B cell (primary cell): ENCODE measurements at regions of chr11 and their contacts with region 1.

Region 1: GRCh38 chr11:64742889-64743590 is 902 bp downstream of the RASGRP2 start:
- DNase-seq: peak; percentile 88
- ATAC-seq: peak; percentile 11
- H3K4me3 ChIP-seq: peak overlapping the region; percentile 48 to 99 (median 86)
- H3K4me3 Mint-ChIP-seq: peak overlapping the region; percentile 97
- H3K27ac ChIP-seq: peak overlapping the region; percentile 84 to 91
- H3K27ac Mint-ChIP-seq: peak overlapping the region; percentile 86
- H3K4me1 ChIP-seq: peaks cover 22 to 33% of the 10 kb centered on the region in 2 donors
- H3K4me1 Mint-ChIP-seq: peaks cover 49% of the 10 kb centered on the region
- H3K27me3 ChIP-seq: no peaks in the 10 kb centered on the region
- H3K27me3 Mint-ChIP-seq: no peaks in the 10 kb centered on the region
- CTCF ChIP-seq: peak; percentile 86

Region 2: GRCh38 chr11:64500176-64501013 is 242.6 kb before region 1 on chr11:
- CTCF ChIA-PET with region 1: no interaction called
- POLR2A ChIA-PET with region 1: no interaction called
- intact Hi-C with region 1: no loop called
- DNase-seq: no peak
- ATAC-seq: no peak
- H3K4me3 ChIP-seq: no peak overlapping the region
- H3K4me3 Mint-ChIP-seq: no peak overlapping the region
- H3K27ac ChIP-seq: no peak overlapping the region
- H3K27ac Mint-ChIP-seq: no peak overlapping the region
- H3K4me1 ChIP-seq: no peaks in the 10 kb centered on the region
- H3K4me1 Mint-ChIP-seq: no peaks in the 10 kb centered on the region
- H3K27me3 ChIP-seq: peaks cover 0 to 6% (median 2%) of the 10 kb centered on the region in 4 experiments
- H3K27me3 Mint-ChIP-seq: peaks cover 18% of the 10 kb centered on the region
- CTCF ChIP-seq: no peak

Region 3: DNA sequence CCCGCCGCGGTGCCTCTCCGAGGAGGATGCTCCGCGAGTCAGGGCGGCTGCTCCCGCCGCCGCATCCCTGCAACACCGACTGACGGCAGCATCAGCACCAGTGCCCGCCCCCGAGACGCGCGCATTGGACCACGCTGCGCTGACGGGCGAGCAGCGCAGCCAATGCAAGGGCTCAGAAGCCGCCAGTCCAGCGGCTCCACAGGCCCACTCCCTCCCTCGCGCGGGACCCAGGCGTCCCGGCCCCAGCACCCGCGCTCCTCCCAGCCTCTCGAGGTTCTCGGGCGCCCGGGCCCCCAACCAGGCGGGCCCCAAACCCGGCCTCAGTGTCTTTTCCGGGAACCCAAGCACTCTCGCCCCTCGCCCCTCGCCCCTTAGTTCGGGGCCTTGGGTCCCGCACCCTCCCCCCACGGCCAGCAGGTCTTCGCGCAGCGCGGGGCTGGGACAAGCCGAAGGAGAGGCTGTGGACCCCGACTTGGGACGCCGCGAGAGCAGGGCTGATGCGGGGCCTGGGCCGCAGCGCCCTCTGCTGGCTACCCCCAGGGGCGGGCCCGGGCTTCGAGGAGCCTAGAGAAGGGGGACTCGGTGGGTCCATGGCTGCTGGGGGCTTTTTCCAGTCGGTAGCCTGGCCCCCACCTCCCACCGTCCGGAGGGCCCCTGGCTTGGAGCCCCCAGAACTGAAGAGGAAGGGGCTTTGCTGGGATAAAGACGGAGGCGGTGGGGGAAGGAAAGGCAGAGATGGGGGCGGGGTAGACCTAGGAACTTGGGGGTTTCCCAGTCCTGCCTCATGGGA is 19.7 kb before region 1 on chr11 and contains the start of gene NRXN2:
- CTCF ChIA-PET with region 1: interaction called, 6 read pairs
- POLR2A ChIA-PET with region 1: interaction called, 6 read pairs
- intact Hi-C with region 1: loop called (anchors 1 kb)
- DNase-seq: peak; percentile 89
- ATAC-seq: peak; percentile 92
- H3K4me3 ChIP-seq: peak within 1 kb of the TSS in 4 of 5 experiments; percentile 67 to 83 (median 76)
- H3K4me3 Mint-ChIP-seq: peak within 1 kb of the TSS; percentile 86
- H3K27ac ChIP-seq: peak within 1 kb of the TSS; percentile 64 to 83
- H3K27ac Mint-ChIP-seq: peak within 1 kb of the TSS; percentile 86
- H3K4me1 ChIP-seq: peaks cover 13 to 23% of the 10 kb centered on the region in 2 donors
- H3K4me1 Mint-ChIP-seq: peaks cover 25% of the 10 kb centered on the region
- H3K27me3 ChIP-seq: peaks cover 0 to 36% (median 10%) of the 10 kb centered on the region in 4 experiments
- H3K27me3 Mint-ChIP-seq: peaks cover 31% of the 10 kb centered on the region
- CTCF ChIP-seq: peak; percentile 99
- total RNA-seq, gene NRXN2: 0.52 TPM in 1 of 2 replicates, not detected in the other

Region 4: DNA sequence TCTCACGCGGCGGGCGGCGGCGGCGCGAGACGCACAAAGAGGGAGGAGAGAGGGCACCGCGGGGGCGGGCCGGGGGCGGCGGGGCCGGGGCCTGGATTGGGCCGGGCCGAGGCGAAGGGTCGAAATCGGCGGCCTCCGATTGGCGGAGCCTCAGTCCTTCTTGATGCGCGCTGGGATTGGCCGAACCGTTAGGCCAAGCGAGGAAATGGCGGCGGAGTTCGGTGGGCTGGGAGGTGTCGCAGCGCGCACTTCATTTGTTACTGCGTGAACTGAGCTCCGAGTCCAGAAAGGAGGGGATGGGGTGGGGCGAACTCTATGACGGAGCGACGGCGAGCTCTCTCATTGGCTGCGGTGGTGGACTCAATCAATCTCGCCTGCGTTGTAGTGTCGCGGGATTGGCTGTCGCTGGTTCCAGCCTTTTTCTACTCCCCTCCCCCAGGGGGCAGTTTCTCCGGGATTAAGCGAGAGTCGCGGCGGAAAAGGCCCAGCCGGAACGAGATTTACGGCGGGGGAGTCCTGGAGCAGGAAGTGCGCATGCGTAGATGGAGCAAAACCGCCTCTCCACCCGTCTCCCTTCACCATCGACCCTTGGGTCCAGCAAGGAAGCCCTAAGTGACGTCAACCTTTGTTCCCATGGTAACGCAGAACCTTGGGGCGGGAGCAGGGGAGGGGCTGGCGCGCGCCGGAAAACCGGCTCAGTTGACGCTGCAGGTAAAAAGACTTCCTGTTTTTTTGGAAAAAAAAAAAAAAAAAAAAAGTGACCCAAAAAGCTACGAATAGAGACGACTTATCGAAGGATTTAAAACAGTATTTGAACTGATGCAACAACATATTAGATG is 35.7 kb after region 1 on chr11 and contains the start of gene SF1:
- CTCF ChIA-PET with region 1: interaction called, 74 read pairs
- POLR2A ChIA-PET with region 1: interaction called, 149 read pairs
- intact Hi-C with region 1: loop called (anchors 1 kb)
- DNase-seq: peak; percentile 100
- ATAC-seq: peak; percentile 82
- H3K4me3 ChIP-seq: peak within 1 kb of the TSS; percentile 79 to 92 (median 82)
- H3K4me3 Mint-ChIP-seq: peak within 1 kb of the TSS; percentile 95
- H3K27ac ChIP-seq: peak within 1 kb of the TSS; percentile 95 to 98
- H3K27ac Mint-ChIP-seq: peak within 1 kb of the TSS; percentile 99
- H3K4me1 ChIP-seq: peaks cover 60 to 71% of the 10 kb centered on the region in 2 donors
- H3K4me1 Mint-ChIP-seq: peaks cover 73% of the 10 kb centered on the region
- H3K27me3 ChIP-seq: no peaks in the 10 kb centered on the region
- H3K27me3 Mint-ChIP-seq: no peaks in the 10 kb centered on the region
- CTCF ChIP-seq: no peak
- total RNA-seq, gene SF1: 914 and 931 TPM in 2 replicates

Region 5: GRCh38 chr11:64803163-64803845 is 60.3 kb after region 1 on chr11 and contains the start of gene MAP4K2:
- CTCF ChIA-PET with region 1: interaction called, 37 read pairs
- POLR2A ChIA-PET with region 1: interaction called, 40 read pairs
- intact Hi-C with region 1: loop called (anchors 2 kb)
- DNase-seq: peak; percentile 90
- ATAC-seq: peak; percentile 83
- H3K4me3 ChIP-seq: peak within 1 kb of the TSS; percentile 66 to 96 (median 71)
- H3K4me3 Mint-ChIP-seq: peak within 1 kb of the TSS; percentile 90
- H3K27ac ChIP-seq: peak within 1 kb of the TSS; percentile 74 to 90
- H3K27ac Mint-ChIP-seq: peak within 1 kb of the TSS; percentile 92
- H3K4me1 ChIP-seq: peaks cover 46 to 54% of the 10 kb centered on the region in 2 donors
- H3K4me1 Mint-ChIP-seq: peaks cover 45% of the 10 kb centered on the region
- H3K27me3 ChIP-seq: no peaks in the 10 kb centered on the region
- H3K27me3 Mint-ChIP-seq: no peaks in the 10 kb centered on the region
- CTCF ChIP-seq: no peak
- total RNA-seq, gene MAP4K2: 118 and 122 TPM in 2 replicates

Region 6: GRCh38 chr11:64878494-64879243 is 135.6 kb after region 1 on chr11 and contains the start of gene EHD1:
- CTCF ChIA-PET with region 1: no interaction called
- POLR2A ChIA-PET with region 1: interaction called, 3 read pairs
- intact Hi-C with region 1: loop called (anchors 1 kb)
- DNase-seq: peak; percentile 100
- ATAC-seq: peak; percentile 84
- H3K4me3 ChIP-seq: peak within 1 kb of the TSS; percentile 78 to 99 (median 92)
- H3K4me3 Mint-ChIP-seq: peak within 1 kb of the TSS; percentile 95
- H3K27ac ChIP-seq: peak within 1 kb of the TSS; percentile 86 to 99
- H3K27ac Mint-ChIP-seq: peak within 1 kb of the TSS; percentile 94
- H3K4me1 ChIP-seq: peaks cover 48 to 59% of the 10 kb centered on the region in 2 donors
- H3K4me1 Mint-ChIP-seq: peaks cover 61% of the 10 kb centered on the region
- H3K27me3 ChIP-seq: no peaks in the 10 kb centered on the region
- H3K27me3 Mint-ChIP-seq: no peaks in the 10 kb centered on the region
- CTCF ChIP-seq: peak; percentile 57
- total RNA-seq, gene EHD1: 249 and 280 TPM in 2 replicates

Region 7: GRCh38 chr11:64996710-64997380 is 253.8 kb after region 1 on chr11 and contains the start of gene BATF2:
- CTCF ChIA-PET with region 1: no interaction called
- POLR2A ChIA-PET with region 1: no interaction called
- intact Hi-C with region 1: no loop called
- DNase-seq: peak; percentile 73
- ATAC-seq: peak; percentile 90
- H3K4me3 ChIP-seq: peak within 1 kb of the TSS in 4 of 5 experiments; percentile 42 to 67 (median 53)
- H3K4me3 Mint-ChIP-seq: peak within 1 kb of the TSS; percentile 77
- H3K27ac ChIP-seq: peak within 1 kb of the TSS in 1 of 2 donors; percentile 60
- H3K27ac Mint-ChIP-seq: peak within 1 kb of the TSS; percentile 74
- H3K4me1 ChIP-seq: peaks cover 15 to 17% of the 10 kb centered on the region in 2 donors
- H3K4me1 Mint-ChIP-seq: peaks cover 26% of the 10 kb centered on the region
- H3K27me3 ChIP-seq: no peaks in the 10 kb centered on the region
- H3K27me3 Mint-ChIP-seq: no peaks in the 10 kb centered on the region
- CTCF ChIP-seq: peak; percentile 25
- total RNA-seq, gene BATF2: 0.51 and 0.62 TPM in 2 replicates